ENCODE measurements at regions of chr12 and their contacts with region 1.

Region 1: GRCh38 chr12:56630160-56630632 is at the start of gene BAZ2A:
- DNase-seq: peak; percentile 88
- ATAC-seq: peak; percentile 70
- H3K4me3 Mint-ChIP-seq: peak within 1 kb of the TSS; percentile 84
- H3K27ac Mint-ChIP-seq: peak within 1 kb of the TSS; percentile 86
- H3K4me1 Mint-ChIP-seq: peaks cover 64% of the 10 kb centered on the region
- H3K27me3 Mint-ChIP-seq: no peaks in the 10 kb centered on the region
- total RNA-seq, gene BAZ2A: 139 to 145 TPM

Region 2: DNA sequence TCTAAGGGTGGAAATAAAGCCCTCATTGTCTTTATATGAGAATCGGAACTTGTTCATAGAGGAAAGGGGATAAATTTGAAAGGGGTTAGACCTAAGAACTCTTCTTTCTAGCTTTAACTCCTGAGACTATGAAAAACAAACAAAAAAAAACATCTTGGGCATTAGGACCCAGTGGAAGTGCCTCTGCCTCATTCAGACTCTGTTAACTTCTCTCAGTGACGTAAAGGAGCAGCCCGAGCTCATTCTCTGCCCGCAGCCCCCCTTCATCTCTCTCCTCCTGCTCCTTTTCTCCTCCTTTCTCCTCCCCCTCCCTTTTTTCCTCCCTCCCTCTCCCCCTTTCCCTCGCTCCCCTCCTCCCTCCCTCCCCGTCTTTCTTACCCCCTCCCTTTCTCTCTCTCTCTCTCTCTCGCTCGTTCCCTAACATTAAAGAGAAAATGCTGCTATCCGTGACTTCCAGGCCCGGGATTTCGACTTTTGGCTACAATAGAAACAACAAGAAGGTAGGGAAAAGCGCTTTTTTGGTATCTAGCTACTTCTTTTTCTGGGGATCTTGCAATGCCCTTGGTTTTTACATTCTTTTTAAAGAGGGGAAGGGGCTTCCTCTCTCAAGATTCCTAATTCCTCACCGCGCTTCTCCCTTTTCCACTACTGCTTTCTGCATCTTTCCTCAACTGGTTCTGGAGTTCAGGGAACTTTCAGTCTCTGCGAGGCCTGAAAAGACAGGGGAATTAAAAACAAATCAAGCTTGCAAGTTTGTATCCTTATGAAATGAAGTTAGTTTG is 108.4 kb before region 1 on chr12 and contains the start of gene RBMS2:
- POLR2A ChIA-PET with region 1: interaction called, 14 read pairs
- DNase-seq: no peak
- ATAC-seq: peak; percentile 95
- H3K4me3 Mint-ChIP-seq: peak within 1 kb of the TSS; percentile 91
- H3K27ac Mint-ChIP-seq: peak within 1 kb of the TSS; percentile 88
- H3K4me1 Mint-ChIP-seq: peaks cover 30% of the 10 kb centered on the region
- H3K27me3 Mint-ChIP-seq: no peaks in the 10 kb centered on the region
- total RNA-seq, gene RBMS2: 10.3 to 14.5 TPM

Region 3: GRCh38 chr12:56645717-56646446 is 15.7 kb after region 1 on chr12 and contains the start of gene ATP5F1B:
- POLR2A ChIA-PET with region 1: interaction called, 53 read pairs
- DNase-seq: peak; percentile 85
- ATAC-seq: peak; percentile 99
- H3K4me3 Mint-ChIP-seq: peak within 1 kb of the TSS; percentile 96
- H3K27ac Mint-ChIP-seq: peak within 1 kb of the TSS; percentile 99
- H3K4me1 Mint-ChIP-seq: peaks cover 28% of the 10 kb centered on the region
- H3K27me3 Mint-ChIP-seq: no peaks in the 10 kb centered on the region
- total RNA-seq, gene ATP5F1B: 468 to 471 TPM

Region 4: DNA sequence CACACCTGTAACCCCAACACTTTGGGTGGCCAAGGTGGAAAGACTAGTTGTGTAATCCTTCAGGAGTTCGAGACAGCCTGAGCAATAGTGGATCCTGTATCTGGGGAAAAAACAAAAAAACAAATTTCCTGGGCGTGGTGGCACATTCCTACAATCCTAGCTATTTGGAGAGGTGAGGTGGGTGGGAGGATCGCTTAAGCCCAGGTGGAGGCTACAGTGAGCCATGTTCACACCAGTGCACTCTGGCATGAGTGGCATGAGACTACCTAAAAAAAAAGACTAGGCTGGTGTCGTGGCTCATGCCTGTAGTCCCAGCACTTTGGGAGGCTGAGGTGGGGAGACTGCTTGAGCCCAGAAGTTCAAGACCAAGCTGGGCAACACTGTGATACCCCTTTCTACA is 40.6 kb after region 1 on chr12:
- POLR2A ChIA-PET with region 1: no interaction called
- DNase-seq: peak; percentile 8
- ATAC-seq: no peak
- H3K4me3 Mint-ChIP-seq: no peak overlapping the region
- H3K27ac Mint-ChIP-seq: no peak overlapping the region
- H3K4me1 Mint-ChIP-seq: peaks cover 25% of the 10 kb centered on the region
- H3K27me3 Mint-ChIP-seq: no peaks in the 10 kb centered on the region

Measured in activated naive CD8-positive, alpha-beta T cell treated with anti-CD3 and anti-CD28 coated beads, Interleukin-2, amount 10 ng/mL, durations not matched to agents 7 days and 5 days (primary cell).